Endothelial cell of umbilical vein (primary cell): ENCODE measurements at regions of chr3 and their contacts with region 1.

Region 1: DNA sequence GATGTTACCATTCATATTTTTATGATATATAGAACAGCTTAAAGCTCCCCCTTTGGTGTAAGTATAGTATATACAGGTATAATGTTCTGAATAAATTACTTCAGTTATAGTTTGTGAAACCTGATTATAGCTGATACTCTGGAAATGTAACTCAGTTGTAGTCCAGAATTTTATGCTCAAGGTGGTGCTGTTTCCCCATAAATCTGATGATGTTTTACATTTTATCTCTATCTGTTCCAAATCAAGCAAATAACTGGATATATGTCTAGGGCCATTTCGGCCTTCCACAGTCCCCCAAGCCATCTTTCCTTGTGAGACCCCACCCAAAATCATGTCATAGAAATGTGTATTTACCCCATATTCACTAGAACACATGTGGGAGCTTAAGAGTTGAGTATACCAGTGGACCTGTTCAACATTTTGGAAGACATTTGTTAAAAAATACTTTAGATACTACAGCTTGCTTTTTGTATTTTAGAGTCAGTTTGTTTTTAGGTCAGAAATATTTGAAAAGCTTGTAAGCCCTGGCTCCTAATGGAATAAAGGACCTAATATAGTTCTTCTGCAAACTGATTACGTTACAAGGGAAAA is 107.1 kb downstream of the ATG7 start:
- DNase-seq: peak; percentile 90
- H3K4me3 ChIP-seq: peak overlapping the region in 2 of 3 experiments; percentile 24 to 43
- H3K27ac ChIP-seq: peak overlapping the region; percentile 98
- H3K4me1 ChIP-seq: peaks cover 21% of the 10 kb centered on the region
- H3K27me3 ChIP-seq: no peaks in the 10 kb centered on the region
- CTCF ChIP-seq: peak; percentile 28 to 43
- POLR2A ChIP-seq: no peak

Region 2: GRCh38 chr3:11509173-11510000 is 130.1 kb after region 1 on chr3:
- CTCF ChIA-PET with region 1: interaction called, 14 read pairs
- POLR2A ChIA-PET with region 1: no interaction called
- dilution Hi-C with region 1: no loop called
- intact Hi-C with region 1: loop called (anchors 1 kb)
- DNase-seq: peak; percentile 89
- H3K4me3 ChIP-seq: no peak overlapping the region
- H3K27ac ChIP-seq: peak overlapping the region; percentile 87
- H3K4me1 ChIP-seq: peaks cover 36% of the 10 kb centered on the region
- H3K27me3 ChIP-seq: no peaks in the 10 kb centered on the region
- CTCF ChIP-seq: no peak
- POLR2A ChIP-seq: no peak

Region 3: GRCh38 chr3:11582191-11582968 is 203.1 kb after region 1 on chr3:
- CTCF ChIA-PET with region 1: interaction called, 8 read pairs
- POLR2A ChIA-PET with region 1: no interaction called
- dilution Hi-C with region 1: no loop called
- intact Hi-C with region 1: loop called (anchors 1 kb)
- DNase-seq: peak; percentile 92
- H3K4me3 ChIP-seq: peak overlapping the region in 1 of 3 experiments; percentile 45
- H3K27ac ChIP-seq: peak overlapping the region; percentile 68
- H3K4me1 ChIP-seq: peaks cover 27% of the 10 kb centered on the region
- H3K27me3 ChIP-seq: no peaks in the 10 kb centered on the region
- CTCF ChIP-seq: no peak
- POLR2A ChIP-seq: peak; percentile 12

Region 4: DNA sequence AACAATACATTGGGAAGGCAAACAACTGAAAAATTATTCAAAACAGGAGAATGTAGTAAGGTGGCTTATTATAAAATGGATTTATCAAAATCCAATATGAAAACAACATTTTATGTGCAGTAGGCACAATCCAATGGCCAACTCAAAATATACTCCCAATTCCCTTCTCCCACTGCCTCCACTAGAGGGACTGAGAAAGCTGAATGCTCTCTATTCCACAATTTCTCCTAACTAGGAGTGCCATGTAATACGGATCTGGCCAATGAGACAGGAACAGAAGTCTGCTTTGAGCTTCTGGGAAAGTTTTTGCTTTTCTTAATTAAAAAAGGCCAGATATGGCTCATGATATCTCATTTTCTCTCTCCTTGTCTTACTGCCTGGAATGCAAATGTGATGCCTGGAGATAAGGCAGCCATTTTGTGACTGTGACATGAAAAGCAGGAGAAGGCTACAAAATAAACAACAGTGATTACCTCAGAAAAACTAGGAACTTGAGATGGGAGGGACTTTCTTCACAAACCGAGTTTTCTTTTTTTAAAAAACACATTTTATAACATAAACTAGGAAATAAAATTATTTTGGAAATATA is 283.2 kb after region 1 on chr3:
- CTCF ChIA-PET with region 1: interaction called, 17 read pairs
- POLR2A ChIA-PET with region 1: no interaction called
- dilution Hi-C with region 1: no loop called
- intact Hi-C with region 1: no loop called
- DNase-seq: peak; percentile 31
- H3K4me3 ChIP-seq: no peak overlapping the region
- H3K27ac ChIP-seq: no peak overlapping the region
- H3K4me1 ChIP-seq: peaks cover 12% of the 10 kb centered on the region
- H3K27me3 ChIP-seq: no peaks in the 10 kb centered on the region
- CTCF ChIP-seq: peak; percentile 33 to 43
- POLR2A ChIP-seq: no peak

Region 5: GRCh38 chr3:11835028-11835639 is 455.8 kb after region 1 on chr3:
- CTCF ChIA-PET with region 1: interaction called, 9 read pairs
- POLR2A ChIA-PET with region 1: no interaction called
- dilution Hi-C with region 1: no loop called
- intact Hi-C with region 1: loop called (anchors 1 kb)
- DNase-seq: peak; percentile 49
- H3K4me3 ChIP-seq: no peak overlapping the region
- H3K27ac ChIP-seq: no peak overlapping the region
- H3K4me1 ChIP-seq: no peaks in the 10 kb centered on the region
- H3K27me3 ChIP-seq: no peaks in the 10 kb centered on the region
- CTCF ChIP-seq: peak; percentile 17 to 30
- POLR2A ChIP-seq: no peak